K562 (cell line): ENCODE measurements at regions of chr15 and their contacts with region 1.

Region 1: GRCh38 chr15:26179906-26180305 is 316.8 kb upstream of the ATP10A start:
- DNase-seq: peak in 1 of 4 experiments; percentile 14
- ATAC-seq: peak; percentile 49; the same call in 2 of the 3 replicates
- H3K4me3 ChIP-seq: no peak overlapping the region
- H3K27ac ChIP-seq: no peak overlapping the region
- H3K4me1 ChIP-seq: no peaks in the 10 kb centered on the region
- H3K27me3 ChIP-seq: no peaks in the 10 kb centered on the region
- CTCF ChIP-seq: peak in 2 of 3 experiments; percentile 31 to 36; a peak in 3 of 6 replicates
- EP300 ChIP-seq: no peak
- POLR2A ChIP-seq: no peak
- RAD21 ChIP-seq: peak in 1 of 2 experiments; percentile 11; a peak in 1 of 4 replicates

Region 2: GRCh38 chr15:25971053-25971452 is 208.9 kb before region 1 on chr15:
- CTCF ChIA-PET with region 1: no interaction called
- POLR2A ChIA-PET with region 1: no interaction called
- in situ Hi-C with region 1: no loop called
- intact Hi-C with region 1: no loop called
- DNase-seq: no peak
- ATAC-seq: no peak
- H3K4me3 ChIP-seq: no peak overlapping the region
- H3K27ac ChIP-seq: no peak overlapping the region
- H3K4me1 ChIP-seq: no peaks in the 10 kb centered on the region
- H3K27me3 ChIP-seq: no peaks in the 10 kb centered on the region
- CTCF ChIP-seq: no peak
- EP300 ChIP-seq: no peak
- POLR2A ChIP-seq: no peak
- RAD21 ChIP-seq: no peak

Region 3: GRCh38 chr15:26259581-26259980 is 79.7 kb after region 1 on chr15:
- CTCF ChIA-PET with region 1: no interaction called
- POLR2A ChIA-PET with region 1: no interaction called
- in situ Hi-C with region 1: no loop called
- intact Hi-C with region 1: loop called (anchors 10 kb)
- DNase-seq: no peak
- ATAC-seq: no peak
- H3K4me3 ChIP-seq: no peak overlapping the region
- H3K27ac ChIP-seq: no peak overlapping the region
- H3K4me1 ChIP-seq: no peaks in the 10 kb centered on the region
- H3K27me3 ChIP-seq: no peaks in the 10 kb centered on the region
- CTCF ChIP-seq: no peak
- EP300 ChIP-seq: no peak
- POLR2A ChIP-seq: no peak
- RAD21 ChIP-seq: no peak

Region 4: DNA sequence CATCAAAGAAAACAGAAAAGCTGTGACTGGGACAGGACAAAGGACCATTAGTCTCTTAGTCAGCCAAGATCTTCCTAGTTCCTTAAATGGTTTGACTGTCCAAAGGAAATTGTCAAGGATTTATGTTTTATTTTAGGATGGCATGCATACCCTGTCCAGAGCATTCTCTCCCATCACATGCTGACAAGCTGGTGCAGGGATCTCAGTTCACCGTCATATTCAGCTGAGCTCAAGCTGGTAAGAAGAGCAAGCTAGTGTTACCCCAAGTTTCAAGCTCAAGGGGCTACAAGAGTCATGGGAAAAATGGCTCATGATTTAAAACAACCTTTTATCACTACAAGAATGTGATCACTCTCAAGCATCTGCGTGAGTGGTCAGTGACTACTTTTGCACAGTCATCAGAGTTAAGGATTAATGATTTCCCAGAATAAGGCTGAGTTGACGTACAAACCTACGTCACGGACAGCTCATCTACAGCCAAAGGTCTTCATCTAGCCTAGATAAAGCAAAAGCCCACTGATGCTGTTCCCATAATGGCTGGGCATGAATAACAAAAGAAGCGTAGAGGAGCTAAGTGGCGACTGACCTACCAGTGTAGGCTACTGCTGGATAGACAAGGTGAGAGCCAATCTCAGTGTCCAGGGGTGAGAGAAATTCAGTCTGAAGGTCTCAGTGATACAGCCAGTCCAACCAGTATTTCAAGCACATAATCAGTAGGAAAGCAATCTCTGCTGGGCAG is 435.5 kb after region 1 on chr15:
- CTCF ChIA-PET with region 1: no interaction called
- POLR2A ChIA-PET with region 1: no interaction called
- in situ Hi-C with region 1: no loop called
- intact Hi-C with region 1: no loop called
- DNase-seq: peak in 1 of 4 experiments; percentile 16
- ATAC-seq: no peak
- H3K4me3 ChIP-seq: no peak overlapping the region
- H3K27ac ChIP-seq: no peak overlapping the region
- H3K4me1 ChIP-seq: no peaks in the 10 kb centered on the region
- H3K27me3 ChIP-seq: no peaks in the 10 kb centered on the region
- CTCF ChIP-seq: no peak
- EP300 ChIP-seq: no peak
- POLR2A ChIP-seq: no peak
- RAD21 ChIP-seq: no peak

Region 5: GRCh38 chr15:26864664-26865191 is 684.8 kb after region 1 on chr15:
- CTCF ChIA-PET with region 1: no interaction called
- POLR2A ChIA-PET with region 1: no interaction called
- in situ Hi-C with region 1: no loop called
- intact Hi-C with region 1: loop called (anchors 10 kb)
- DNase-seq: peak; percentile 16 to 54 (median 32)
- ATAC-seq: peak; percentile 81
- H3K4me3 ChIP-seq: no peak overlapping the region
- H3K27ac ChIP-seq: no peak overlapping the region
- H3K4me1 ChIP-seq: peaks cover 0 to 7% of the 10 kb centered on the region in 2 experiments; a peak in 1 of 5 replicates
- H3K27me3 ChIP-seq: peaks cover 0 to 8% of the 10 kb centered on the region in 2 experiments; a peak in 1 of 5 replicates
- CTCF ChIP-seq: peak; percentile 60 to 77 (median 65)
- EP300 ChIP-seq: no peak
- POLR2A ChIP-seq: no peak
- RAD21 ChIP-seq: peak; percentile 59 to 71